ENCODE measurements at regions of chr21 and their contacts with region 1.

Region 1: GRCh38 chr21:17387030-17387617 is 125.7 kb upstream of the CXADR start:
- DNase-seq: peak; percentile 72
- H3K4me3 ChIP-seq: no peak overlapping the region
- H3K27ac ChIP-seq: no peak overlapping the region
- H3K4me1 ChIP-seq: no peaks in the 10 kb centered on the region
- H3K27me3 ChIP-seq: no peaks in the 10 kb centered on the region
- CTCF ChIP-seq: peak; percentile 80

Region 2: GRCh38 chr21:17334484-17334883 is 52.6 kb before region 1 on chr21:
- CTCF ChIA-PET with region 1: no interaction called
- POLR2A ChIA-PET with region 1: no interaction called
- intact Hi-C with region 1: no loop called
- DNase-seq: no peak
- H3K4me3 ChIP-seq: no peak overlapping the region
- H3K27ac ChIP-seq: no peak overlapping the region
- H3K4me1 ChIP-seq: no peaks in the 10 kb centered on the region
- H3K27me3 ChIP-seq: no peaks in the 10 kb centered on the region
- CTCF ChIP-seq: no peak

Region 3: GRCh38 chr21:17512253-17513213 is 125.4 kb after region 1 on chr21 and contains the start of gene CXADR:
- CTCF ChIA-PET with region 1: no interaction called
- POLR2A ChIA-PET with region 1: no interaction called
- intact Hi-C with region 1: loop called (anchors 5 kb)
- DNase-seq: peak; percentile 83
- H3K4me3 ChIP-seq: peak within 1 kb of the TSS; percentile 83
- H3K27ac ChIP-seq: peak within 1 kb of the TSS; percentile 70
- H3K4me1 ChIP-seq: peaks cover 11% of the 10 kb centered on the region
- H3K27me3 ChIP-seq: no peaks in the 10 kb centered on the region
- CTCF ChIP-seq: peak; percentile 53
- total RNA-seq, gene CXADR: 15.2 and 17.7 TPM in 2 replicates

Region 4: DNA sequence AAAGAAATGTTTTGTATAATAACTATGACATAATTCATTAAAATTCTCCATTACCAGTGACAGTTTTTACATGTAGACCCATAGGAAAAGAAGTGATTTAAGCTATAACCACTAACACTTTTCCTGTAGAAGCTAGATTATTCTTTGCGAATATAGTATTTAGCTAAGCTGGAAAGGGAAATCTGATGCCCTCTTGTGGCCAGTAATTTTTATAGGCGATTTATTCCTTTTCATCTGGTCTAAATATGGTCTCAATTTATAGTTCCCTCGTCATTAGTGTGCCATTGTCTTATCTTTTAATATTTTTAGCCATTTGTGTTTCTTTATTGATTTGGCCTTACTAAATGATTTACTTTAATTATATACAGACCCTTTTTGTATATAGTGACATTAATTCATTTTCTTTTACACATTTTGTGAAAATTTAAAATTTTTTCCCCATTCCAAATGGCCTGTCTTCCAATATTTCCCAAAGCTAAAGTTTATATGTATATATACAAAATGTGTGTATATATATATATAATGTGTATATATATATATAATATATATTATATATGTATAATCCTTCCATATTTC is 198.8 kb after region 1 on chr21:
- CTCF ChIA-PET with region 1: interaction called, 55 read pairs
- POLR2A ChIA-PET with region 1: no interaction called
- intact Hi-C with region 1: loop called (anchors 1 kb)
- DNase-seq: peak; percentile 65
- H3K4me3 ChIP-seq: no peak overlapping the region
- H3K27ac ChIP-seq: no peak overlapping the region
- H3K4me1 ChIP-seq: no peaks in the 10 kb centered on the region
- H3K27me3 ChIP-seq: no peaks in the 10 kb centered on the region
- CTCF ChIP-seq: peak; percentile 67

Region 5: DNA sequence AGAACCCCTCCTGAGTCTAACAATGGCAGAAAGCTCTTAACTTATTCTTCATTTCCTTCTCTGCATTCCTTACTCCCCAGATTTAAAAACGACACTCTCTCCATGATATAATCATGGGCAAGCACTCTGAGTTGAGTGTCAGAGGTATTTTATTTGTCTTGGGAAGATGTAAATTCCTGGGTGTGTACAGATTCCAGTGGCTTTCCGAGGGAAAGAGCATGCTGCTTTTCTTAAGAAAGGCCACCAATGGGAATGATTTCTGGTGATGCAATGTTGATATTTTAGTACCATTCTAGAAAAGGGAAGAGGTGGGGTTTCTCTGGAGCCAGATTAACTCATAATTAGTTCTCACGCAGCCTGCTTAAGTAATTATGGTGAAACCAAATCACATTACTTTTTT is 273.3 kb after region 1 on chr21:
- CTCF ChIA-PET with region 1: interaction called, 5 read pairs
- POLR2A ChIA-PET with region 1: no interaction called
- intact Hi-C with region 1: loop called (anchors 10 kb)
- DNase-seq: peak; percentile 24
- H3K4me3 ChIP-seq: no peak overlapping the region
- H3K27ac ChIP-seq: no peak overlapping the region
- H3K4me1 ChIP-seq: no peaks in the 10 kb centered on the region
- H3K27me3 ChIP-seq: no peaks in the 10 kb centered on the region
- CTCF ChIP-seq: no peak

Region 6: GRCh38 chr21:17903029-17903806 is 516.1 kb after region 1 on chr21:
- CTCF ChIA-PET with region 1: no interaction called
- POLR2A ChIA-PET with region 1: no interaction called
- intact Hi-C with region 1: loop called (anchors 10 kb)
- DNase-seq: peak; percentile 50
- H3K4me3 ChIP-seq: no peak overlapping the region
- H3K27ac ChIP-seq: no peak overlapping the region
- H3K4me1 ChIP-seq: no peaks in the 10 kb centered on the region
- H3K27me3 ChIP-seq: no peaks in the 10 kb centered on the region
- CTCF ChIP-seq: peak; percentile 48; the same call in 1 of the 2 replicates